ENCODE measurements at regions of chr14 and their contacts with region 1.

Region 1: GRCh38 chr14:49867831-49868723 is 15.5 kb upstream of the NEMF start:
- DNase-seq: peak; percentile 99
- ATAC-seq: peak; percentile 93
- H3K4me3 Mint-ChIP-seq: peak overlapping the region; percentile 98
- H3K27ac Mint-ChIP-seq: peak overlapping the region; percentile 100
- H3K4me1 Mint-ChIP-seq: peaks cover 30% of the 10 kb centered on the region
- H3K27me3 Mint-ChIP-seq: no peaks in the 10 kb centered on the region

Region 2: DNA sequence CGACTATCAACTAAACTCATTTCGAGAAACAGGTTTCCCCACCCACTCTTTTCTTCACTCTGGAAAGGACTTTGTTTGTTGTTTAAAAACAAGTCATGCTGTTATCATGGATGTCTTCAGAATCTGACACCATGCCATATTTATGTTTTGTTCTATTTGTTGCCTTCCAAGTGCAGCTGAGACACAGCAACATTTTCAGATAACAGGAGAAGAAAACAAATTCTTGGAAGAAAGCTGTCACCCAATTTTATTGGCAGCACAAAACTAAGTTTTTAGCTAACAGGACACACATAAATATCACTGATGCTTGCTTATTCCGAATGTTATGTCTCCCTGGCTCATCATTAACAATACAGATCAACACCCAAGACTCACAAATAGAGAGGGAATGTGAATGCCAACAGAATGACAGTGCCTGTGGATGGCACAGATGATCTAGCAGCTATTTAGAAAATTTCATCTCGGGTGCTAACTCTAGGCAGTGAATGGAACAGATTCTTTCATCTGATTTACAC is 429.8 kb before region 1 on chr14:
- CTCF ChIA-PET with region 1: no interaction called
- DNase-seq: no peak
- ATAC-seq: no peak
- H3K4me3 Mint-ChIP-seq: no peak overlapping the region
- H3K27ac Mint-ChIP-seq: no peak overlapping the region
- H3K4me1 Mint-ChIP-seq: no peaks in the 10 kb centered on the region
- H3K27me3 Mint-ChIP-seq: peaks cover 6% of the 10 kb centered on the region

Region 3: DNA sequence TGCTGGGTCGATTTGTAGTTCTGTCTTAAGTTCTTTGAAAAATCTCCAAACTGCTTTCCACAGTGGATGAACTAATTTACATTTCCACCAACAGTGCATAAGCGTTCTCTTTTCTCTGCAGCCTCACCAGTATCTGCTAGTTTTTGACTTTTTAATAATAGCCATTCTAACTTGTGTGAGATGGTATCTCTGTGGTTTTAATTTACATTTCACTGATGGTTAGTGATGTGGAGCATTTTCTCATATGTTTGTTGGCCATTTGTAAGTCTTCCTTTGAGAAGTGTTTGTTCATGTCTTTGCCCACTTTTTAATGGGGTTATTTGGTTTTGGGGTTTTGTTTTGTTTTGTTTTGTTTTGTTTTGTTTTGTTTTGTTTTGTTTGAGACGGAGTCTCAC is 307.7 kb before region 1 on chr14:
- CTCF ChIA-PET with region 1: no interaction called
- DNase-seq: no peak
- ATAC-seq: no peak
- H3K4me3 Mint-ChIP-seq: no peak overlapping the region
- H3K27ac Mint-ChIP-seq: no peak overlapping the region
- H3K4me1 Mint-ChIP-seq: no peaks in the 10 kb centered on the region
- H3K27me3 Mint-ChIP-seq: peaks cover 9% of the 10 kb centered on the region

Region 4: DNA sequence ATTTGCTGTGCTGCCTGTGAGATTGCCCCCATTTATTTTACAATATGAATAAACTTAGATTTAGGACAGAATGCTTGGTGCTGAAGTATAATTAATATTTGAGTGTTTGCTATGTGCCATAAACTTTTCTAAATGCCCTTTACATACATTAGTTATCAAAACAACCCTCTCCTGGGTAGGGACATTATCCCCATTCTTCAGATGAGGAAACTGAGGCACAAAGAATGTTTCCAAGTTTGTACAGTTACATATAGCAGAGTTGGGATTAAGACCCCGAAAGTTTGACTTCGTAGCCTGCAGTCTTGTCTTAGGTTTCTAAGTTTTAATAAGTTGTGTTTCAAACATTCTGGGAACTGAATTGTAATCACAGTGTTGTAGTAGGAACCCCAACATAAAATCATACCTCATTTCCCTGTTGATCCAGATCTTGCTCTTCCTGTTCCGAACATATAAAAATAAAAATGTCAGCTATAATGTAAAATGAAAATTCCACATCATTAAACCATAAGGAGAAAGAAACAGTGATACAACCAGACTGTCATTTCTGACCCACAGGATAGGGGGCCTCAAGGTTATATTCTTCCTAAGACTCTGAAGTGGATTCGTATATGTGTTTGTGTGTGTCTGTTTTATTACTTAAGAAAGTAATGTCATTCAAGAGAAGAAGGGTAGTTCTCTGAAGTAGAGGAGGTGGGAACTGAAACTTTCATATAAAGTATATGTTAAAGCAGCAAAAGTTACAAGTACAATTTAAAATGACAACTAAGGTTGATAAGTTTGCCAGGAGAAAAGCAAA is 81.6 kb before region 1 on chr14:
- CTCF ChIA-PET with region 1: no interaction called
- DNase-seq: no peak
- ATAC-seq: no peak
- H3K4me3 Mint-ChIP-seq: no peak overlapping the region
- H3K27ac Mint-ChIP-seq: no peak overlapping the region
- H3K4me1 Mint-ChIP-seq: no peaks in the 10 kb centered on the region
- H3K27me3 Mint-ChIP-seq: no peaks in the 10 kb centered on the region

Region 5: DNA sequence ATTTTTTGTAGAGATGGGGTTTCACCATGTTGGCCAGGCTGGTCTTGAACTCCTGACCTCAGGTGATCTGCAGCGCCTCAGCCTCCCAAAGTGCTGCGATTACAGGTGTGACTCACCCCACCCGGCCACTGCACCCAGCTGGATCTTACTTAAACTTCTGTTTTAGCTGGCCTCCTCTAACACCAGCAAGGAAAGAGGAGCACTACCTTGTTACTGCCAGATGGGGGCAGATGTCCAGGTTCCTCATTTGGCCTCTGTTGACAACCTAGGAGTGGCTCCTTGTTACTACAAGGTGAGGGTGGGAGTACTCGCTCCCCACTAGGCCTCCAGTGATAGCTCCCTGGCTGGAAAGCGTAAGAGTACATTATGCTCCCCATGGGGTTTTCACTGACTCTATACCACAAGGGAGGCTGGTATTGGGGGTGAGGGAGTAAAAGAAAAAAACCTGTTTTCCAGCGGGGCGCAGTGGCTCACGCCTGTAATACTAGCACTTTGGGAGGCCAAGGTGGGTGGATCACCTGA is 11.7 kb after region 1 on chr14:
- CTCF ChIA-PET with region 1: interaction called, 20 read pairs
- DNase-seq: peak; percentile 83
- ATAC-seq: peak; percentile 96
- H3K4me3 Mint-ChIP-seq: no peak overlapping the region
- H3K27ac Mint-ChIP-seq: peak overlapping the region; percentile 52
- H3K4me1 Mint-ChIP-seq: peaks cover 24% of the 10 kb centered on the region
- H3K27me3 Mint-ChIP-seq: no peaks in the 10 kb centered on the region

Region 6: DNA sequence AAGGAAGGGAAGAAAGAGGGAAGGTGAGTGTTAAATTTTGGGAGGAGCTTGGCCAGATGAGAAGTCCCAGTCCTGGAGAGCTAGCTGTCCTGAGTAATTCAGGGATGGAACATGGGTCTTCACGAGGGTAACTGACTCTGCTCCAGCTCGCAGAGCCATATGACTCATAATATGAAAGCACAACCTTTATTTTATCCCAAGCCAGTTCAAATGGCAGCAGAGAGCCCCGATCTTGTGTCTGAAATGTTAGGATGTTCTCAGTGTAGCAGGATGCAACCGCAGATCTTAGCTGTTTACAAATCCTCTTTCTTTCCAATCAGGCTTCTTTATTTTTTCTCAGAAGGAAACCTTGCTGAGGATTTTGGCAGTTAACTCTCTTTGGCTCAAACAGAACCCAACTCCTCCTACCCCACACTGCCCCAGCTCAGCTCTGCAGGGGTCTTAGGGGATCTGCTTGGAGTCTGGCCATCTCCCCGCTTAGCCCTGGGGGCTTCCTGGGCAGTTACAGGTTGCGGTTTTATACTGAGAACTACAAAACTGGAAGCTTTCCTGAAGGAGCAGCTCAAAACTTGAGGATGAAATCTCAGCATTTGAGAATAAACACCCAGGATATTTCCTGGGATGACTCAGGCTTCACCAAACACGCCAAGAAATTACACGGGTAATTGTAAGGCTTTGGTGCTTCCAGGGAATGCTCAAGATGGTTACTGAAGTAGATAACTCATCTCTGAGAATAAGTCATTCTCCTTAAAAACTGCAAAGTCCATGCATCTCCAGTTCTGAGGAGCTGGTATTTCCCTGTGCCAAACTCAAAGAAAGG is 155.8 kb after region 1 on chr14:
- CTCF ChIA-PET with region 1: no interaction called
- DNase-seq: no peak
- ATAC-seq: no peak
- H3K4me3 Mint-ChIP-seq: no peak overlapping the region
- H3K27ac Mint-ChIP-seq: no peak overlapping the region
- H3K4me1 Mint-ChIP-seq: peaks cover 31% of the 10 kb centered on the region
- H3K27me3 Mint-ChIP-seq: no peaks in the 10 kb centered on the region

Region 7: DNA sequence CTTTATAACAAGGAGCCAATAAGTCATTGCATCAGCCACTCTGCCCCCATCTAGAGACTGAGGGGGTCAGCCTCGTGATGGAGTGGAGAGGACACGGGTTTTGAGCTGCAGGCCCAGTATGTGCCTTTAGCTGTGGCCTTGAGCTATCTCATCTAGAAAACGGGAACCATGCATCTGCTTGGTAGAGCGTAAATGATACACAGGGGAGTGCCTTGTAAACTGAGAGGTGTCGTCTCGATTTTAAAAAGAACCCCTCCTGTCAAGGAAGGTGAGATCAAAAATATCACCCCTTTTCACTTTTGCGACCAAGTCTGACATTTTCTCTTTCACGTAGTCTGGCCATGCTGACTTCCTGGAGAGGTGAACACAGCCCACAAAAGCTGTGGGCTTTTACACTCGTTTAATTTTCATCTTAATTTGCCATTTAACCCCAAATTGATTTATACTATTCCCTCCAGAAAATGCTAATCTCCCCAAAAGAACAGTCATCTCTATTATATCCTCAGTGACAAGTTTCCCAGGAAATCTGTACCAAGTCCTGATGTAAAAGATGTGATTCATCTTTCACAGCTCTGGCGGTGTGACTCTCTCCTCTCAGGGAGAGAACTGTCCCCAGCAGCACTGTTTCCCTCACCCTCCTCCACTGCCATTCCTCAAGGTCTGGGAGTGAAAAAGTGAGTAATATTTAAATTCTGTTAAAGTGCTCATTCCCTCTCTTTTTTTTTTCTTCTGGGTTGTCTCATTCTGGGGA is 217.7 kb after region 1 on chr14:
- CTCF ChIA-PET with region 1: interaction called, 38 read pairs
- DNase-seq: peak; percentile 56
- ATAC-seq: no peak
- H3K4me3 Mint-ChIP-seq: peak overlapping the region; percentile 52
- H3K27ac Mint-ChIP-seq: peak overlapping the region; percentile 95
- H3K4me1 Mint-ChIP-seq: peaks cover 91% of the 10 kb centered on the region
- H3K27me3 Mint-ChIP-seq: no peaks in the 10 kb centered on the region

Region 8: GRCh38 chr14:50091240-50091913 is 223.3 kb after region 1 on chr14:
- CTCF ChIA-PET with region 1: interaction called, 30 read pairs
- DNase-seq: no peak
- ATAC-seq: no peak
- H3K4me3 Mint-ChIP-seq: no peak overlapping the region
- H3K27ac Mint-ChIP-seq: no peak overlapping the region
- H3K4me1 Mint-ChIP-seq: peaks cover 74% of the 10 kb centered on the region
- H3K27me3 Mint-ChIP-seq: no peaks in the 10 kb centered on the region

Region 9: GRCh38 chr14:50099335-50099734 is 231.3 kb after region 1 on chr14:
- CTCF ChIA-PET with region 1: interaction called, 121 read pairs
- DNase-seq: no peak
- ATAC-seq: no peak
- H3K4me3 Mint-ChIP-seq: no peak overlapping the region
- H3K27ac Mint-ChIP-seq: no peak overlapping the region
- H3K4me1 Mint-ChIP-seq: peaks cover 55% of the 10 kb centered on the region
- H3K27me3 Mint-ChIP-seq: peaks cover 5% of the 10 kb centered on the region